PC-3 (cell line): ENCODE measurements at regions of chr18 and their contacts with region 1.

Region 1: DNA sequence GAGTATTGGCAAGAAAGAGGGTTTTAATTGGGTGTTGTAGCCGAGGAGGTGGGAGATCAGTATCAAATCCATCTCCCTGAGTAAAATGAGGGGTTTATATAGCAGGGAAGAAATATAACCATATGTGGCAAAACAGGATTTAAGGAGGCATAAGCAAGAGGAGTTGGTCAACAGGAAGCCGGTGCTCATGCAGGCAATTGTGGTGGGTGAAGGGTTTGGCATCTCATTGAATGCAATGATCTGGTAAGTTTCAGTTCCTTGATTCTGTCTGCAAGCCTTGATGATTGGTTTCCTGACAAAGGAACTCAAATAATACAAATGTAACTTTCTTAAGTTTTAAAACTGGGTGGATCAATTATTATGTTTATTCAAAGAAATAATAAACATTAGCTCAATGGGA is 564.4 kb upstream of the LINC00305 start:
- DNase-seq: peak; percentile 40
- ATAC-seq: no peak
- H3K4me3 ChIP-seq: no peak overlapping the region
- H3K27ac ChIP-seq: peak overlapping the region; percentile 21; the same call in 1 of the 2 replicates
- H3K4me1 ChIP-seq: peaks cover 68% of the 10 kb centered on the region
- H3K27me3 ChIP-seq: no peaks in the 10 kb centered on the region
- CTCF ChIP-seq: no peak

Region 2: GRCh38 chr18:64851726-64852125 is 138.4 kb after region 1 on chr18:
- CTCF ChIA-PET with region 1: no interaction called
- POLR2A ChIA-PET with region 1: interaction called, 4 read pairs
- intact Hi-C with region 1: loop called (anchors 1 kb)
- DNase-seq: peak; percentile 79
- ATAC-seq: peak; percentile 98
- H3K4me3 ChIP-seq: no peak overlapping the region
- H3K27ac ChIP-seq: peak overlapping the region; percentile 62
- H3K4me1 ChIP-seq: peaks cover 15% of the 10 kb centered on the region
- H3K27me3 ChIP-seq: no peaks in the 10 kb centered on the region
- CTCF ChIP-seq: no peak

Region 3: GRCh38 chr18:64893349-64893748 is 180.1 kb after region 1 on chr18:
- CTCF ChIA-PET with region 1: no interaction called
- POLR2A ChIA-PET with region 1: no interaction called
- intact Hi-C with region 1: no loop called
- DNase-seq: no peak
- ATAC-seq: no peak
- H3K4me3 ChIP-seq: no peak overlapping the region
- H3K27ac ChIP-seq: no peak overlapping the region
- H3K4me1 ChIP-seq: peaks cover 13% of the 10 kb centered on the region
- H3K27me3 ChIP-seq: no peaks in the 10 kb centered on the region
- CTCF ChIP-seq: no peak

Region 4: GRCh38 chr18:64972545-64972944 is 259.3 kb after region 1 on chr18:
- CTCF ChIA-PET with region 1: no interaction called
- POLR2A ChIA-PET with region 1: no interaction called
- intact Hi-C with region 1: loop called (anchors 5 kb)
- DNase-seq: peak; percentile 33
- ATAC-seq: peak; percentile 82
- H3K4me3 ChIP-seq: no peak overlapping the region
- H3K27ac ChIP-seq: 0 out of 2 replicates have a peak overlapping the region, but pooled peaks have one; percentile 6
- H3K4me1 ChIP-seq: peaks cover 12% of the 10 kb centered on the region; the same call in 1 of the 2 replicates
- H3K27me3 ChIP-seq: no peaks in the 10 kb centered on the region
- CTCF ChIP-seq: no peak